Activated B cell treated with CpG ODN at 0.5 μM for 24 hours (primary cell): ENCODE measurements at regions of chr22 and their contacts with region 1.

Region 1: DNA sequence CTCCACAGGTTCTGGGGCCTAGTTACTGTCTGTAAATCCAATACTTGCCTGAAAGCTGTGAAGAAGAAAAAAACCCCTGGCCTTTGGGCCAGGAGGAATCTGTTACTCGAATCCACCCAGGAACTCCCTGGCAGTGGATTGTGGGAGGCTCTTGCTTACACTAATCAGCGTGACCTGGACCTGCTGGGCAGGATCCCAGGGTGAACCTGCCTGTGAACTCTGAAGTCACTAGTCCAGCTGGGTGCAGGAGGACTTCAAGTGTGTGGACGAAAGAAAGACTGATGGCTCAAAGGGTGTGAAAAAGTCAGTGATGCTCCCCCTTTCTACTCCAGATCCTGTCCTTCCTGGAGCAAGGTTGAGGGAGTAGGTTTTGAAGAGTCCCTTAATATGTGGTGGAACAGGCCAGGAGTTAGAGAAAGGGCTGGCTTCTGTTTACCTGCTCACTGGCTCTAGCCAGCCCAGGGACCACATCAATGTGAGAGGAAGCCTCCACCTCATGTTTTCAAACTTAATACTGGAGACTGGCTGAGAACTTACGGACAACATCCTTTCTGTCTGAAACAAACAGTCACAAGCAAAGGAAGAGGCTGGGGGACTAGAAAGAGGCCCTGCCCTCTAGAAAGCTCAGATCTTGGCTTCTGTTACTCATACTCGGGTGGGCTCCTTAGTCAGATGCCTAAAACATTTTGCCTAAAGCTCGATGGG is 13.5 kb downstream of the PIK3IP1 start:
- DNase-seq: no peak
- ATAC-seq: no peak
- H3K4me3 Mint-ChIP-seq: no peak overlapping the region
- H3K27ac Mint-ChIP-seq: peak overlapping the region; percentile 13
- H3K4me1 Mint-ChIP-seq: no peaks in the 10 kb centered on the region
- H3K27me3 Mint-ChIP-seq: no peaks in the 10 kb centered on the region
- CTCF ChIP-seq: no peak

Region 2: DNA sequence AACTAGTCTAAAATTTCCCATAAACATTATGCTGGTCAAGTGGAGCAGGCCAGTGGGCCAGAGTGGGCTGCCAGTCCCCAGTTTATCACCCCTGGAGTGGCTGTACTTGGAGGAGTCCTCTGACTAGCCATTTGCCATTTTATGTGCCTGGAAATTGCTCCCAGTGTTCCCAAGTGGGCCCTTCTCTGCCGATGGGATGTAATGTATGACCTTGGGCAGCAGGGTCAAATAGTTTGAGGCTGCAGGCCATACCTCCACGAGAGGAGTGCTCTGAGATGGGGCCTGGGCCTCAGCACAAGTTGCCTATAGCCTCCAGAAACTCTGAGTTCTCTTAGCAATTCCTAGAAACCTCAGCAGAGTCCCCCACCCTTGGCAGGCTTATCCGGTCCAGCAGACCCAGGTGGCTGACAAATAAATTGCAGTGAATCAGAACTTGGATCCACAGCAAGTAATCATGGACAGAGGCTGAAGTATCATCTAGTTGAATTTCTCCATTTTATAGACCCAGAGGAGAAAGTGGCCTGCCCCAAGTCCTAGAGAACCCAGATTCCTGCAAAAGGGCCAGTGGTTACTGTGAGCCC is 85.2 kb after region 1 on chr22:
- CTCF ChIA-PET with region 1: no interaction called
- POLR2A ChIA-PET with region 1: interaction called, 14 read pairs
- intact Hi-C with region 1: no loop called
- DNase-seq: no peak
- ATAC-seq: no peak
- H3K4me3 Mint-ChIP-seq: no peak overlapping the region
- H3K27ac Mint-ChIP-seq: no peak overlapping the region
- H3K4me1 Mint-ChIP-seq: no peaks in the 10 kb centered on the region
- H3K27me3 Mint-ChIP-seq: no peaks in the 10 kb centered on the region
- CTCF ChIP-seq: no peak